ENCODE measurements at regions of chr6 and their contacts with region 1.

Region 1: DNA sequence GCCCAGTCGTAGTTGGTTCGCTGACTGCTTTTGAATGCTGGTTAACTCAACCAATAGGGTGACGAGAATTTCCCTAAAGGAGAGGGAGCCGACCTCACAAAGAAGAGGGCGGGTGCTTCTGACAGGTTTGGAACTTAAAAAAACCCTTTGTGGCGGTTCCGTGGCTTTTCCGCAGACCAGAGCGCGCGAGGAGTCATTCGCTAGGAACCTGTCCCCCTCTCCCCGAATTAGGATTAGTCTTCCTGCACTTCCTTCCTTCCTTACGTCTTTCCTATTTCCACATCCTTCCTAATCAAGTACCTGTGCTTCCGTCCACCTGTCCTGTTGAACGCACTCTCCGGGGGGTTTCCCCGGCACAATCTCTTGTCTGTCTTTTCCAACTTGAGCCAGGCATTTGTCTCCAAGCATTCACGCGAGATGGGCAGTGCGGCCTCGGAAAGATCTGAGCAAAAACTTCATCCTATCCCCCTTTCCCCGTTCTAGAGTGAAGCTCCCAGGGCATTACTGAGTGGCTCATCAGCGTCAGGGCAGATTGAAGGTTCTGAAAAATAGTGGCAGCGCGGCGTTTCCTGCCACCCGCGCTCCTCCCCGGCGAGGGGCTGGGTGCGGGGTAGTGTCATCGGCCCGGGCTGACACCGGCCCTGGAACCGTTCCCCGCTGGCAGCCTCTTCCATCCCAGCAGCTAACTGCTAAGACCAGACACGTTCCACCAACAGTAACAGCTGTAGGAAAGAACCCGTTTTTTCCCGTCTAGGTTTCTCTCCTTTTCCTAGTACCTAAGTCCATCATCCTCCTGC is 1.5 kb upstream of the STXBP5 start:
- DNase-seq: peak; percentile 74 to 81
- ATAC-seq: peak; percentile 87 to 92 (median 92)
- H3K4me3 ChIP-seq: peak overlapping the region; percentile 94
- H3K27ac ChIP-seq: peak overlapping the region; percentile 98
- H3K4me1 ChIP-seq: peaks cover 12% of the 10 kb centered on the region
- H3K27me3 ChIP-seq: no peaks in the 10 kb centered on the region
- CTCF ChIP-seq: no peak

Region 2: DNA sequence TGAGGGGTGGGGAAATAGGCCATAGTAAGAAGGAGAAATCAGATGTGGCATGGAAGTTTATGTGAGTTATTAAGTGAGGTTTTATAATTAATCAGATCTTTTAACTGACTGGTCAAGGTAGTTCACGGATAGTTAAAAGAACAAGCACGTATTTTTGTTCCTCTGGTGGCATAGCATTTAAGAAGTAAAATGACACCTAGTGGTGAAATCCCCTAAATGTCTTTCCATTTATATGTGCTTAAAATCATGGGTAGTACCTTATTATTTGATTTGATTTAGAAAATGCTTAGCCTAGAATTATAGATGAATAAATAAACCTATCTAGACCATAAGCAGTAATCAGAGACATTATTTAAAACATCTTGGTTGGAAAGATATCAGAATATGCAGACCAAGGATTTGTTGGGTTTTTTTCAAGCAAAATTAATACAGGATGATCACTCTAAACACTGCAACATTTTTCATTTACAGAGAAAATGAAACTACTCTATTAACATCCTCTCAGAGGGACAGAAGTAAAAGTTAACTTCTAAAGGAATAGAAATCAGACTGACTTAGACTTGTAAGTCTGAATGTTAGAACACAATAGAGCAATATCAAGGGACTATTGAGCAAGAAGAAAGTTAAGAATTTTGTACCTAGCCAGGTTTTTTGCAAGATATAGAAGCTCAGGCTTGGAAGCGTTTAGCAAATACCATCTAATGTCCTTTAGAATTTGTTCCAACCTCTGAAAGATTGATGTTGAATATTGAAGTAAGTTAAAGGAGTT is 82.6 kb after region 1 on chr6:
- intact Hi-C with region 1: loop called in 1 of 2 experiments (anchors 5 kb)
- DNase-seq: no peak
- ATAC-seq: peak in 2 of 4 donors; percentile 37 to 85
- H3K4me3 ChIP-seq: no peak overlapping the region
- H3K27ac ChIP-seq: no peak overlapping the region
- H3K4me1 ChIP-seq: peaks cover 11% of the 10 kb centered on the region
- H3K27me3 ChIP-seq: no peaks in the 10 kb centered on the region
- CTCF ChIP-seq: peak; percentile 52

Measured in psoas muscle (tissue), 8 donors.